Cardiac septum (tissue), 1 donor: ENCODE measurements at regions of chr6 and their contacts with region 1.

Region 1: GRCh38 chr6:14876778-14877613 is 368.9 kb upstream of the JARID2 start:
- DNase-seq: no peak

Region 2: DNA sequence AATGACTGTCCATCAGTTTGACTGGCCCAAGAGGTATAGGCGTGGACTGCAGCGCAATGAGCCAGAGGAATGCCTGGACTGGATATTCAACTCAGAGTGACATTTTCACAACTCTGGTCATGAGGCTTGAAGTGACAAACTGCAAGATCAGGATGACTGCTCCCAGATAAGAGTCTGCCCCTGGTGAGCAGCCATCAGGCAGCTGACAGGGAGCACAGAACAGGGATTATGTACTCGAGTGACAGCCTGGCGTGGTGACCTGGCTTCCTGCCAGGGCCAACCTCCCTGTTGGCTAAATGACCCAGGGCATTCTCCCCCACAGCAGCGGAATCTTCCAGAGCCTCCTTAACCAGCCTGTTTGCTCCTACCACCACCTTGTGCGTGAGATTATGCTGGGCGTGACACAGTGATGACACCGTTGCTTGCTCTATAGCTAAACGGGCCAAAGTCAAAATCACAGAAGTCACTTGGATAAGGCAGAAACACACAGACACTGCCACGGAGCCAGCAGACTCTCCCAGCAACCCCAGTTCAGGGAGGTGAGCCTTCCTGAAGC is 159.8 kb after region 1 on chr6:
- intact Hi-C with region 1: loop called (anchors 5 kb)
- DNase-seq: peak; percentile 90

Region 3: GRCh38 chr6:15491255-15491985 is 614.4 kb after region 1 on chr6:
- intact Hi-C with region 1: loop called (anchors 10 kb)
- DNase-seq: peak; percentile 86